ENCODE measurements at regions of chr5 and their contacts with region 1.

Region 1: GRCh38 chr5:95858661-95859326 is 36.3 kb upstream of the GLRX start:
- ATAC-seq: peak; percentile 67 to 96 (median 93)
- H3K4me3 ChIP-seq: peak overlapping the region in 2 of 5 donors; percentile 2 to 4
- H3K27ac ChIP-seq: peak overlapping the region; percentile 4 to 53
- H3K4me1 ChIP-seq: peaks cover 15 to 34% of the 10 kb centered on the region in 2 donors

Region 2: GRCh38 chr5:95631991-95632675 is 226.7 kb before region 1 on chr5:
- in situ Hi-C with region 1: no loop called
- ATAC-seq: peak in 2 of 8 experiments; percentile 73 to 84
- H3K4me3 ChIP-seq: no peak overlapping the region
- H3K27ac ChIP-seq: no peak overlapping the region
- H3K4me1 ChIP-seq: no peaks in the 10 kb centered on the region

Region 3: DNA sequence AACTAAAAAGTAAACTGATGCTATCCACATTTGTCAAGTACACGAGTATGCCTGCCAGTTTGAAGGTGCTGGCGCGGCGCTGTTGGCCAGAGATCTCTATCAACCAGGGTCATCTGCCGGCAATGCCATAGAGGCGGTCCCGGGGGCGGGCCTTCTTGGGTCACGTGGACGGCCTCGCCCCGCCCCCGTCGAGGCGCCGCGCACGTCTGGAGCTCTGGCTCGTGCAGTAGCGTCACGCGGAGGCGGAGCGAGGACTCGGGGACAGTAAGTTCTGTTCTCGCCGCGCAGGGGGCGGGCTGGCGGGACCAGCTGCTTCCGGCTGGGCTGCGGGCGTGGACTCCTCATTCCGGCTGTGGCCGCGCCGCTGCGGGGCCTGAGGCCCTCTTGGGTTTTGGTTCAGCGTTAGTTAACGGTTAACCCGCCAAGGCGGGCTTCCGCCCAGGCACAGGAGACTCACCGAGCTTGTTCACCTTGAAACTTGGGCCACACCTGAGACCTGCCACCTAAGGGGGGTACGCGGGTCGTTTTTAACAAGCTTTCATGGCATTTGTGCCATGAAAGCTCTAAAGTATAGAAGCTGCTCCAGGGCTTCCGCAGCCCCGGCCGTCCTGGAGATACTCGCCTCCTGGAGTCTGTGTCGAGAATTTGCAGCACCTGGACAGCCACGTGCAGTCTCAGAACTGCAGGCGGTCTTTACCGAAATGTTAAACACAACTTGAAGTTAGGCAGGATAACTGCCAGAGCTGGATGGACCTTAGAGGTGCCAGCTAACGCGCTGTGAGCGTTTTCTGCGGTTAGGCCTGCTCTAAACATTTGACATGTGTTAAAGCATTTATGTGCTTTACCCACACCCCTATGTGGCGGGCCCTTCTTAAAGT is 212.0 kb before region 1 on chr5 and contains the start of gene RFESD:
- in situ Hi-C with region 1: no loop called
- ATAC-seq: peak; percentile 97 to 100 (median 100)
- H3K4me3 ChIP-seq: peak within 1 kb of the TSS; percentile 39 to 54 (median 47)
- H3K27ac ChIP-seq: peak within 1 kb of the TSS; percentile 46 to 70
- H3K4me1 ChIP-seq: peaks cover 0 to 8% of the 10 kb centered on the region in 2 donors
- total RNA-seq, gene RFESD: 1.1 to 6.7 (median 2.7) TPM

Region 4: GRCh38 chr5:95973793-95974325 is 115.1 kb after region 1 on chr5:
- in situ Hi-C with region 1: no loop called
- ATAC-seq: no peak
- H3K4me3 ChIP-seq: no peak overlapping the region
- H3K27ac ChIP-seq: no peak overlapping the region
- H3K4me1 ChIP-seq: no peaks in the 10 kb centered on the region

Region 5: DNA sequence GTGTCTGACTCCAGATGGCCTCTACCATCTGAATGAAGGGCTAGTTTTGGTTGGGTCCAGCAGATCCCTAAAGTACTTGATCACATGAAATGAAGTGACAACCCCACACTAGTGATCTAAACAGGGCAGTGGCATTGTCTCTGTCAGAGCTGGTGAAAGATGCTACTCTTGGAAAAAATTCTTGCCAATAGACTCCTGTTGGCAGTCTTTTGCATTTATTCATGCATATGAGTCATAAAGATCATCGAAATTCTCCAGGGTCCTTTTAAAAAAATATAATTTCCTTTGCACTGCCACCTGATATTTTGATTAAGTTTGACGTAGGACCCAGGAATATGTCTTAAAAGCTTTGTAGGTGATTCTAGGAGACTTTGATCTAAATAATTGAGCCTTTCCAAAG is 237.9 kb after region 1 on chr5:
- in situ Hi-C with region 1: no loop called
- ATAC-seq: peak in 1 of 8 experiments; percentile 52
- H3K4me3 ChIP-seq: no peak overlapping the region
- H3K27ac ChIP-seq: no peak overlapping the region
- H3K4me1 ChIP-seq: no peaks in the 10 kb centered on the region

Region 6: GRCh38 chr5:96220610-96221390 is 362.0 kb after region 1 on chr5:
- in situ Hi-C with region 1: loop called in 1 of 9 experiments (anchors 25 kb)
- ATAC-seq: peak in 2 of 8 experiments; percentile 16 to 37
- H3K4me3 ChIP-seq: no peak overlapping the region
- H3K27ac ChIP-seq: no peak overlapping the region
- H3K4me1 ChIP-seq: peaks cover 0 to 7% of the 10 kb centered on the region in 2 donors

Region 7: GRCh38 chr5:96336351-96336985 is 477.7 kb after region 1 on chr5:
- in situ Hi-C with region 1: loop called in 8 of 9 experiments (anchors 10 to 25 kb)
- ATAC-seq: peak; percentile 70 to 97 (median 88)
- H3K4me3 ChIP-seq: no peak overlapping the region
- H3K27ac ChIP-seq: no peak overlapping the region
- H3K4me1 ChIP-seq: peaks cover 0 to 3% of the 10 kb centered on the region in 2 donors

Region 8: GRCh38 chr5:96595300-96596090 is 736.7 kb after region 1 on chr5:
- in situ Hi-C with region 1: loop called in 2 of 9 experiments (anchors 25 kb)
- ATAC-seq: no peak
- H3K4me3 ChIP-seq: no peak overlapping the region
- H3K27ac ChIP-seq: no peak overlapping the region
- H3K4me1 ChIP-seq: peaks cover 0 to 20% of the 10 kb centered on the region in 2 donors

Region 9: DNA sequence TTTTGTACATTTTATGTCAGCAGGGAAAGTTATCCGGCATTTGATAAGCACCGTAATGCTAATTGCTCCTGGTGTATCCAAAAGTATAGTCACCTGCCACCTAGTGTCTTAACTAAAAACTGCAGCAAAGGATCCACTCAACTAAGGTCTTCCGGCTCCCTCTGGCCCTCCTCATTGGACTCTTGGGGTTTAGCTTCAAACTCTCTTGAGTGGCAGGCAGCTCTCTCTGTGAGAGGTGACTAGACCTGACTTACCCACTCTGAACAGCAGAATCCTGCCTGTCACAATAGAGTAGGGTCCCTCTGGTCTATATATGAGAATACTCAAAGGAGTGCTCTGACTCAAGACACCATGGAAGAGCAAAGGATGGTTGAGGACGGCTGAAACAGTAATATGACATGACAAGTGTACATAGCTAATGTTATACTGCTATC is 743.0 kb after region 1 on chr5:
- in situ Hi-C with region 1: loop called in 2 of 9 experiments (anchors 25 kb)
- ATAC-seq: peak; percentile 57 to 91 (median 64)
- H3K4me3 ChIP-seq: no peak overlapping the region
- H3K27ac ChIP-seq: no peak overlapping the region
- H3K4me1 ChIP-seq: peaks cover 0 to 16% of the 10 kb centered on the region in 2 donors